ENCODE measurements at regions of chr7 and their contacts with region 1.

Region 1: DNA sequence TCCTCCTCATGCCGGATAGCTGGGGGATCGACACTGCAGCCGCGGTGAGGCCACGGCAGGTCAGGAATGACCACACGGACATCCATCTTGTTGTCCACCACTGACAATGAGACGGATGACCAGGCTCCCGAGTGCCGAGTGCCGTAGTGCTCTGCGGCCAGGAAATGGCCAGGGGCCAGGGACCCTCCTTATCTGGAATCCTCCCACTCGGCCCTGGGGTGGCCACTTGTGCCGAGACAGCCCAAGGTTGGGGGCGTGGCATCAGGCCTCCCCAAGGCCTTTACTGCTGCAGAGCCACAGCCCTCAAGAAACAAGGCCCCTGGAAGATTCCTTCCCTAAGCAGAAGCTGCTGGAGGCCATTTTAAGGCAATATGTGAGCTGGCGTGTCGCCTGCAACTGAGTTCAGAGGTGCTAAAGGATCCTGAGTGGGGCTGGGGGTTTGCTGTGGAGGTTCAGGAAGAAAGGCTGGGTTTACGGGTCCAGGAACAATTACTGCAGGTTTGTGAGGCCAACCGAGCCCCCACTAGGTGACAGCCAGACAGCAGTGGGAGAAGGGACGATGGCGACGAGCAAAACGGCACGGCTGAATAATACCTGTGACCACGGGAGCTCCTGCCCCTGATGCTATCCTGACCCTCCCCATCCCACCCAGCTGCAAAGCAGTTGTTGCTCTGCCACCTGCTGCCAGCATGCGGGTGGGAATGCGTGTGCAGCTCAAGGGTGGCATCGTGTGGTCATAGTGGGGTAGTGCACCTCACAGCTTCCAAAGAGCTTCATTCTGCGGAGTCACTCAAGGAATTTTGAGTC is 31.6 kb upstream of the LEP start:
- DNase-seq: peak; percentile 13
- ATAC-seq: peak; percentile 85
- H3K4me3 ChIP-seq: no peak overlapping the region
- H3K27ac ChIP-seq: no peak overlapping the region
- H3K4me1 ChIP-seq: no peaks in the 10 kb centered on the region
- H3K27me3 ChIP-seq: no peaks in the 10 kb centered on the region; a peak in 3 of 4 replicates
- CTCF ChIP-seq: peak; percentile 97 to 99 (median 99); a peak in 5 of 6 replicates
- EP300 ChIP-seq: no peak
- POLR2A ChIP-seq: no peak
- RAD21 ChIP-seq: peak; percentile 99

Region 2: DNA sequence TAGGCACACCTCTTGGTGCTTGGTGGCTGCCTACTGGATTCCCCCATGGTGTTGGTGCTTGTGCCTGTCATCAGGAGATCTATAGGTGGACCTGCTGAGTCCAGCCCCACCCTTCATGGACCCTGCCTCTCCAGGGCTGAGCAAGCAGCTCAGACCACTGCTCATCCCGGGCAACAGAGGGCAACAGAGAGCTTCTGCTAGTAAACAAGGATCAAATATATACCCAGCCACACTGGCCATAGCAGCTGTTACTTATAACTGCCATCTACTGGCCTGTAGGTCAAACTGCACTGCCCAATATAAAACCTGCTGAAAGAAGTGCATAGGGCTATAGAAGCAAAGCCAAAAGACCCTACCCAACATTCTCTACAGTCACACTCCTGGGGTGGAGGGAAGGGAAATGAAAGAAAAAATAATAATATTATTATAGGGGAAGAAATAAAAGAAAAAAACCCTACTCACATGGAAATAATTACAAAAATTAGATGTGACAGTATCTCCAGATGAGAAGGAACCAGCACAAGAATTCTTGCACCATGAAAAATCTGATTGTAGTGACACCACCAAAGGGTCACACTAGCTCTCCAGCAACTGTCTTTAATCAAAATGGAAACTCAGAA is 762.0 kb before region 1 on chr7:
- CTCF ChIA-PET with region 1: interaction called, 3 read pairs
- POLR2A ChIA-PET with region 1: no interaction called
- RAD21 ChIA-PET with region 1: interaction called, 10 read pairs
- SMC1A ChIA-PET with region 1: interaction called, 8 read pairs
- in situ Hi-C with region 1: no loop called
- intact Hi-C with region 1: loop called (anchors 5 kb)
- DNase-seq: peak; percentile 28
- ATAC-seq: peak; percentile 100
- H3K4me3 ChIP-seq: no peak overlapping the region
- H3K27ac ChIP-seq: no peak overlapping the region
- H3K4me1 ChIP-seq: no peaks in the 10 kb centered on the region
- H3K27me3 ChIP-seq: no peaks in the 10 kb centered on the region
- CTCF ChIP-seq: peak; percentile 64 to 85 (median 77)
- EP300 ChIP-seq: no peak
- POLR2A ChIP-seq: no peak
- RAD21 ChIP-seq: peak; percentile 87

Region 3: DNA sequence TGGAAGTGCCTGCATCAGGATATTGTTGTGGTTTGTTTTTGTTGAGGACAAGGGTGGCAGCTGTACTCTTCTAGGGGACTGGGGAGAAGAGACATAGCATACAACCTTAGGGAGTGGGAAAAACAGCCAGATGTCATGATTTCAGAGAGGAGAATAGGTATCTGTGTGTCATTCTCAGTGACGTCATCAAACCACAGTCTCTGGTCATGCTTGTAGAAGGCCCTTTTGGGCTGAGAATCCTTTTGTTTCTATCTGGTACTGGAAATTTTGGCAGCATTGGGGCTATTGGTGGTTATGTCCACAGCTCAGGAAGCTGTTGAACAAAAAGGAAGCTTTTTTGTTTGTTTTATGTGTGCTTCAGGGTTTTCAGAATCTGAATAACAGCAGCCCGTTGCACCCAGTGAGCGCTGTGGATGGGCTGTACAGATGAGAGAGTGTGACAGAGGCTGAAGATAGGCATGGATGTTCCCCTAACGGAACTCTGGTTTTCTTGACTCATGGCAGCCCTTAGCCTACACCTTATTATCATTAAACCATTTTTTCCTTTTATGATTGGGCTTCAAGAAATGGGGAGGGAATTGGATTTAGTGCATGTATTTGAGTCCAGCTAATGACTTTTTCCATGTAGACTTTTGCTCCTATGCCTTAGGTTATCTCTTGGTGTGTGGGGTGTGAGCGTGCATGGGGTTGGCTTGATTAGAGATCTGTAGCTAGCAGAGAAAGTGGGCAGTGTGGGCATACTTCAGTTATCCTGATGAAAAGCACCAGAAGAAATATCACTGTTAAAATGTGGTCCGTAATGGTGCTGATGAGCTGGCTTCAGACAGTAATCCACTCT is 491.7 kb before region 1 on chr7:
- CTCF ChIA-PET with region 1: interaction called, 8 read pairs
- POLR2A ChIA-PET with region 1: no interaction called
- RAD21 ChIA-PET with region 1: interaction called, 6 read pairs
- SMC1A ChIA-PET with region 1: no interaction called
- in situ Hi-C with region 1: loop called (anchors 5 kb)
- intact Hi-C with region 1: no loop called
- DNase-seq: no peak
- ATAC-seq: peak; percentile 78
- H3K4me3 ChIP-seq: no peak overlapping the region
- H3K27ac ChIP-seq: no peak overlapping the region
- H3K4me1 ChIP-seq: no peaks in the 10 kb centered on the region
- H3K27me3 ChIP-seq: no peaks in the 10 kb centered on the region
- CTCF ChIP-seq: no peak
- EP300 ChIP-seq: no peak
- POLR2A ChIP-seq: no peak
- RAD21 ChIP-seq: no peak

Region 4: DNA sequence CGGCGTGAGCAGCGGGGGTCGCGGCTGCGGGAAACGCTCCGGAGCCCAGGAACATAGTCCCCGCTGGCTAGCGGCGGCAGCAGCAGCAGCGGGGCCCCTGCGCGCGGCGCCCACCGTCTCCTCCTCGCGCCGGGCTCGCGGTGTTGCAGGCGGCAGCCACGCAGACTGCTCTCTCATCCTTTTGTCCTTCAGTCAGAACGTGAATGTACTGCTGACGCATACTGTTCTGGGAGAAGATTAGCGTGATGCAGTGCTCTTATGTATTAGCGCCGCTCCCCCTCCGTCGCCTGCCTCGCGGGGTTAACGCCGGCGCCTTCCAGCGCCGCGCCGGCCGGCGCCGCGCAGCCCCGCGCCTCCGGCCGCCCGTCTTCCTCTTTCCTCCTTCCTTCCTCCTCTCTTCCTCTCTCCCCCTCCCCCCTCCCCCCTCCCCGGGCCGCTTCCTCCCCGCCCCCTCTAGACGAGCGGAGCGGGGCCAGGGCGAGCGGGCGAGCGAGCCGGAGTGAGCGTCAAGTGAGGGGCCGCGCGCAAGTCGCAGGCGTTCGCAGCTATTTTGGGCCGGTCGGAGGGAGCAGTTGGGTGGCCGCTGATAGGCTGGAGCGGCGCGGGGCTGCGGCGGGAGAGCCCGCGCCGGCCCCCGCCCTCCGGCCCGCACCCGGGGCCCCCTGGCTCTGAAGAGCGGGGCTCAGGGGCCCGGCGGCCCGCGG is 177.4 kb before region 1 on chr7:
- CTCF ChIA-PET with region 1: interaction called, 4 read pairs
- POLR2A ChIA-PET with region 1: no interaction called
- RAD21 ChIA-PET with region 1: interaction called, 5 read pairs
- SMC1A ChIA-PET with region 1: interaction called, 6 read pairs
- in situ Hi-C with region 1: no loop called
- intact Hi-C with region 1: loop called (anchors 5 kb)
- DNase-seq: no peak
- ATAC-seq: peak; percentile 12; the same call in 2 of the 3 replicates
- H3K4me3 ChIP-seq: peak overlapping the region; percentile 20; the same call in 1 of the 2 replicates
- H3K27ac ChIP-seq: no peak overlapping the region
- H3K4me1 ChIP-seq: peaks cover 30% of the 10 kb centered on the region
- H3K27me3 ChIP-seq: no peaks in the 10 kb centered on the region
- CTCF ChIP-seq: no peak
- EP300 ChIP-seq: no peak
- POLR2A ChIP-seq: no peak; the same call in none of the 2 replicates
- RAD21 ChIP-seq: no peak

Region 5: DNA sequence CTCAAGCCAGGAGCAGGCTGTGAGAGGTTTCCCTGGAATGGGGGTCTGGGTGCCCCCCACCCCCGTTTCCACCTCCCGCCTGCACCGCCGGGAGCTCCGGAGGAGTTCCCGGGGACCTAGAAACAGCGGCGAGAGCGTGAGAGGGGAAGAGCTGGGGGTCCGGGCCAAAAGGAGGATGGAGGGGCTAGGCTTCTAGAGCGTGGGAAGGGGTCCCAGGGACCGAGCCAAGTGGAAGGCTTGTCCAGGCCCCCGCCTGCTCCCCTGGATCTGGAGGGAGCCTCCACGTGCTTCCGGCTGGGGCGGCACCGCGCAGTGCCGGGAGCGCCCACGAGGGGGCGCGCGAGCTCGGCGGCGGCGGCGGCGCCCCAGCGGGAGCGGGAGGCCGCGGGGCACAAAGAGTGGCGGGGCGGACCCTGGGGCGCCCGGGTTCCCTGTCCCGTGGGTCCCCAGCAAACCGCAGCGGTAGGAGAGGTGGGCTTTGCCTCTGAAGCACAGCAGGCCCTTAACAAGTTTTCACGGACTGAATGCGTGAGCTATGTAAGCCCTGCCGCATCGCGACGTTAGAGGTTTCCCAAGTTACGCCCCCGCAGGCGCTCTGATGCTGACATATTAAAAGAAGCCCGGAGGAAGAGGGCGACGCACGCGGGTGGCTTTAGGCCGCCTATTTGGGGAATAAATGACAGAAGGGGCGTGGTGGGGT is 73.8 kb before region 1 on chr7:
- CTCF ChIA-PET with region 1: interaction called, 127 read pairs
- POLR2A ChIA-PET with region 1: no interaction called
- RAD21 ChIA-PET with region 1: interaction called, 73 read pairs
- SMC1A ChIA-PET with region 1: interaction called, 34 read pairs
- in situ Hi-C with region 1: loop called (anchors 5 kb)
- intact Hi-C with region 1: loop called (anchors 1 kb)
- DNase-seq: no peak
- ATAC-seq: peak; percentile 98
- H3K4me3 ChIP-seq: peak overlapping the region; percentile 61
- H3K27ac ChIP-seq: no peak overlapping the region
- H3K4me1 ChIP-seq: peaks cover 4% of the 10 kb centered on the region
- H3K27me3 ChIP-seq: peaks cover 9% of the 10 kb centered on the region in 2 experiments
- CTCF ChIP-seq: peak; percentile 72 to 89 (median 75)
- EP300 ChIP-seq: no peak
- POLR2A ChIP-seq: no peak; the same call in 1 of the 2 replicates
- RAD21 ChIP-seq: peak; percentile 69